ENCODE measurements at regions of chr16 and their contacts with region 1.

Region 1: DNA sequence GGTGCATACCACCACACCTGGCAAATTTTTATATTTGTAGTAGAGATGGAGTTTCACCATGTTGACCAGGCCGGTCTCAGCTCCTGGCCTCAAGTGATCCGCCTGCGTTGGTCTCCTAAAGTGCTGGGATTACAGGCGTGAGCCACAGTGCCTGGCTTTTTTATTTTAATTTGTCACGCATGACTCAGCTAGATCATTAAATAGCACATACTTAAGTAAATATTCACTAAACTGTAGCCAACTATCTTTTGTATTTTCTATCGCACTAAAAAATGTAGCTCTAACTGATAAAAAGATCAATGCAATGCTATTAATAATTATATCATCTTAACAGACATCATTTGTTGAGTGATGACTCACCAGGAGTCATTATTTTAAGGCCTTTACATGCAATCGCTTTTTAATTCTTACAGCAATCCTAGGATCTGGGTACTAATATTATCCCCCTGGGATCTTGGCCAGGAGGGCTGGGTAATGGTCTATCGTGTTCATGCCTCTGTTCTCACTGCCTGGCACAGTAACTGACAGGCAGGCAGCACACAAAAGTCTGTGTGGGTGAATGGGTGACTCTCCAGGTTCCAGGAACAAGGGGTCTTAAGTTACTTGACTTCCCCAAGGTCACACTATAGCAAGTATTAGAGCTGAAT is 693.5 kb upstream of the EEF2KMT start:
- DNase-seq: peak; percentile 40
- H3K4me3 Mint-ChIP-seq: no peak overlapping the region
- H3K27ac Mint-ChIP-seq: no peak overlapping the region
- H3K4me1 Mint-ChIP-seq: peaks cover 41% of the 10 kb centered on the region
- H3K27me3 Mint-ChIP-seq: no peaks in the 10 kb centered on the region
- CTCF ChIP-seq: no peak

Region 2: GRCh38 chr16:5738592-5738991 is 52.5 kb before region 1 on chr16:
- CTCF ChIA-PET with region 1: no interaction called
- intact Hi-C with region 1: loop called (anchors 5 kb)
- DNase-seq: peak; percentile 73
- H3K4me3 Mint-ChIP-seq: no peak overlapping the region
- H3K27ac Mint-ChIP-seq: no peak overlapping the region
- H3K4me1 Mint-ChIP-seq: no peaks in the 10 kb centered on the region
- H3K27me3 Mint-ChIP-seq: peaks cover 8% of the 10 kb centered on the region
- CTCF ChIP-seq: no peak

Region 3: GRCh38 chr16:5756969-5757368 is 34.2 kb before region 1 on chr16:
- CTCF ChIA-PET with region 1: no interaction called
- intact Hi-C with region 1: loop called (anchors 5 kb)
- DNase-seq: no peak
- H3K4me3 Mint-ChIP-seq: no peak overlapping the region
- H3K27ac Mint-ChIP-seq: no peak overlapping the region
- H3K4me1 Mint-ChIP-seq: peaks cover 8% of the 10 kb centered on the region
- H3K27me3 Mint-ChIP-seq: no peaks in the 10 kb centered on the region
- CTCF ChIP-seq: no peak

Region 4: GRCh38 chr16:5851393-5851982 is 60.4 kb after region 1 on chr16:
- CTCF ChIA-PET with region 1: no interaction called
- intact Hi-C with region 1: loop called (anchors 2 kb)
- DNase-seq: peak; percentile 44
- H3K4me3 Mint-ChIP-seq: no peak overlapping the region
- H3K27ac Mint-ChIP-seq: peak overlapping the region; percentile 19
- H3K4me1 Mint-ChIP-seq: peaks cover 24% of the 10 kb centered on the region
- H3K27me3 Mint-ChIP-seq: no peaks in the 10 kb centered on the region
- CTCF ChIP-seq: no peak

Measured in Calu3 (cell line).